AG04449 (cell line): ENCODE measurements at regions of chr6 and their contacts with region 1.

Region 1: DNA sequence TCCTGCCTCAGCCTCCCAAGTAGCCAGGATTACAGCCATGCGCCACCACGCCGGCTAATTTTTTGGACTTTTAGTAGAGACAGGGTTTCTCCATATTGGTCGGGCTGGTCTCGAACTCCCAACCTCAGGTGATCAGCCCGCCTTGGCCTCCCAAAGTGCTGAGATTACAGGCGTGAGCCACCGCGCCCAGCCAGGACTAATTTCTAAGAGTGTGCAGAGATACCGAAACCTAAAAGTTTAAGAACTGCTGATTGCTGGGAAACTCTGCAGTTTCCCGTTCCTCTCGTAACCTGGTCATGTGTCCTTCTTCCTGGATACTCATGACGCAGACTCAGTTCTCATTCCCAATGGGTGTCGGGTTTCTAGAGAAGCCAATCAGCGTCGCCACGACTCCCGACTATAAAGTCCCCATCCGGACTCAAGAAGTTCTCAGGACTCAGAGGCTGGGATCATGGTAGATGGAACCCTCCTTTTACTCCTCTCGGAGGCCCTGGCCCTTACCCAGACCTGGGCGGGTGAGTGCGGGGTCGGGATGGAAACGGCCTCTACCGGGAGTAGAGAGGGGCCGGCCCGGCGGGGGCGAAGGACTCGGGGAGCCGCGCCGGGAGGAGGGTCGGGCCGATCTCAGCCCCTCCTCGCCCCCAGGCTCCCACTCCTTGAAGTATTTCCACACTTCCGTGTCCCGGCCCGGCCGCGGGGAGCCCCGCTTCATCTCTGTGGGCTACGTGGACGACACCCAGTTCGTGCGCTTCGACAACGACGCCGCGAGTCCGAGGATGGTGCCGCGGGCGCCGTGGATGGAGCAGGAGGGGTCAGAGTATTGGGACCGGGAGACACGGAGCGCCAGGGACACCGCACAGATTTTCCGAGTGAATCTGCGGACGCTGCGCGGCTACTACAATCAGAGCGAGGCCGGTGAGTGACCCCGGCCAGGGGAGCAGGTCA is at the start of gene HLA-E:
- DNase-seq: peak; percentile 97
- H3K4me3 ChIP-seq: peak within 1 kb of the TSS; percentile 82
- CTCF ChIP-seq: no peak

Region 2: DNA sequence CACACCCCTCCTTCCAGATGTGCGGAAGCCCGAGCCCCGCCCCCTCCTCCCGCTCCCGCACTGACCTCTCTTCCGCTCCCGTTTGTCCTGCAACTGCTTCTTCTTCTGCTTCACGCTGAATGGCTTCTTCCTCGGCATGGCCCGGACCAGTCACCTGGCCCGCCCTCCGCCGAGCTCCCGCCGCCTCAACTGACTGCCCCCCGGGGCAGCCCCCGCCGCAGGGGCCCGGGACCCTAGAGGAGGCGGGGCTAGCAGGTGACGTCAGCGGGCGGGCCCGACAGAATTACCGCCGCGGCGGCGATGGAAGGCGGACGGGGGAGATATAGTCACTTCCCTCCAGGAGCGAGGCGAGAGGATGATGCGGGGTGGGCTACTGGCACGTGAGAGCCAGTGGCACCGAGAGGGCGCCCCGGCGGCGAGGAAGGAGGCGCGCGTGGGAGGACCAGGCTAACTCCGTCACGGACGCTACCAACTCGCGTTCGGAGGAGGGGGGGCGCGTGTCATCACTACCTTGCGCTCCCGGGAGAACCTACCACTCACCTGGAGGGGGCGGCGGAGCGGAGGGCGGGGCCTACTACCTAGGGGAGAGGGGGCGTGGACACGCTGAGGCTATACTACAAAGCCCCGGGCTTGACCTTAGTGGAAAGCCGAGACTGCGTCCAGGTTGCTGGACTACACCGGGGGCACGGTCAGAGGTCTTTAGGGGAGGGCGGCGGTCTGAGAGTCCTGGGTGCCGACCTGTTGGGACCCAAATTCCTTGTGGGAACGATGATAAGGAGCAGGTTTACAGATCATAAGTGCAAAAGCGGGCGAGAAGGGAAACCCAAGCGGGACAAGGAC is 66.9 kb after region 1 on chr6 and contains the start of gene GNL1:
- CTCF ChIA-PET with region 1: interaction called, 788 read pairs
- POLR2A ChIA-PET with region 1: interaction called, 3 read pairs
- DNase-seq: peak; percentile 47
- H3K4me3 ChIP-seq: peak within 1 kb of the TSS; percentile 100
- CTCF ChIP-seq: no peak

Region 3: GRCh38 chr6:31025595-31025994 is 536.2 kb after region 1 on chr6:
- CTCF ChIA-PET with region 1: no interaction called
- POLR2A ChIA-PET with region 1: no interaction called
- DNase-seq: no peak
- H3K4me3 ChIP-seq: no peak overlapping the region
- CTCF ChIP-seq: no peak